RWPE1 (cell line): ENCODE measurements at regions of chr15 and their contacts with region 1.

Region 1: DNA sequence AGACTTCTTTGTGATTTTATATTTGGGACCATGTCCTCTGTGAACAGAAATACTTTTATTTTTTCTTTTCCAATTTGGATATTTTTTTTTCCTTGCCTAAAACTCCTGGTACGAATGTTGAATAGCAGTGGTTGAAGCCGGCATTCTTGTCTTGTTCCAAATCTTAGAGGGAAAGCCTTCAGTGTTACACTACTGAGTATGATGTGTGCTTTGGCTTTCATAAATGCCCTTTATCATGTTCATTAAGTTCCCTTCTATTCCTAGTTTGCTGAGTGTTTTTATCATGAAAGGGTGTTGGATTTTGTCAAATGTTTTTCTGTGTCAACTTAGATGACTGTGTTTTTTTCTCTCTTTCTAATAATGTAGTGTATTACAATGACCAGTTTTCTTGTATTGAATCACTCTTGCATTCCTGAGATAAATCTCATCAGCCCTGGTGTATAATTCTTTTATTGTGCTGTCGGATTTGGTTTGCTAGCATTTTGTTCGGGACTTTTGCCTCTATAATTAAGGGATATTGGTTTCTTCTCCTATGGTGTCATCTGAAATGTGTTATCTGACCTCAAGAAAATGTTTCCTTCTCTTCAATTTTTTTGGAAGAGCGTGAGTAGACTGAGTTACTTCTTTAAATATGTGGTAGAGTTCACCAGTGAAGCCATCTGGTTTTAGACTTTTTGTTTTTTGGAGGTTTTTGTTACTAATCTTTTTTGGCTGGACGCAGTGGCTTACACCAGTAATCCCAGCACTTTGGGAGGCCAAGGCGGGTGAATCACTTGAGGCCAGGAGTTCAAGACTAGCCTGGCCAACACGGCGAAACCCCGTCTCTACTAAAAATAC is 33.3 kb downstream of the MAP1A start:
- DNase-seq: no peak
- H3K27ac ChIP-seq: no peak overlapping the region
- CTCF ChIP-seq: no peak

Region 2: GRCh38 chr15:43528542-43529007 is 22.2 kb before region 1 on chr15:
- CTCF ChIA-PET with region 1: no interaction called
- POLR2A ChIA-PET with region 1: interaction called, 11 read pairs
- DNase-seq: no peak
- H3K27ac ChIP-seq: no peak overlapping the region
- CTCF ChIP-seq: no peak

Region 3: GRCh38 chr15:44366971-44367370 is 816.2 kb after region 1 on chr15:
- CTCF ChIA-PET with region 1: no interaction called
- POLR2A ChIA-PET with region 1: no interaction called
- DNase-seq: no peak
- H3K27ac ChIP-seq: no peak overlapping the region
- CTCF ChIP-seq: no peak